ENCODE measurements at regions of chr7 and their contacts with region 1.

Region 1: DNA sequence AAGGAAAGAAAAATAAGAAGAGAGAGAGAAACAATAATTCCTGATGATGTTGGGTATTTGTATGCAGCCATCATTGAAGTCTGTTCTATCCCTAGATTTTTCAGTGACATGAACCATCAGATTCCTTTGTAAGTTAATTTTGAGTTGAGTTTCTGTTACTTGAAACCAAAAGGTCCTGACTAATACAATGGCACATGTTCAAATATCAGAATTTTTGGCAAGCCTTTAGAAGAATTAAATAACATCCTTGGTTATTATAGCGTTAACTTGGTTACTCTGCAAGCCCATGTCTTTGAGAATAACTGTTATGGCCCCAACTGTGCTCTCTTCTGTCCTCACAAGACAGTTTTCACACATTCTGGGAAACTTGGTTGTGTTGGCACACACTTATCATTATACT is 66.5 kb downstream of the SYPL1 start:
- DNase-seq: no peak

Region 2: DNA sequence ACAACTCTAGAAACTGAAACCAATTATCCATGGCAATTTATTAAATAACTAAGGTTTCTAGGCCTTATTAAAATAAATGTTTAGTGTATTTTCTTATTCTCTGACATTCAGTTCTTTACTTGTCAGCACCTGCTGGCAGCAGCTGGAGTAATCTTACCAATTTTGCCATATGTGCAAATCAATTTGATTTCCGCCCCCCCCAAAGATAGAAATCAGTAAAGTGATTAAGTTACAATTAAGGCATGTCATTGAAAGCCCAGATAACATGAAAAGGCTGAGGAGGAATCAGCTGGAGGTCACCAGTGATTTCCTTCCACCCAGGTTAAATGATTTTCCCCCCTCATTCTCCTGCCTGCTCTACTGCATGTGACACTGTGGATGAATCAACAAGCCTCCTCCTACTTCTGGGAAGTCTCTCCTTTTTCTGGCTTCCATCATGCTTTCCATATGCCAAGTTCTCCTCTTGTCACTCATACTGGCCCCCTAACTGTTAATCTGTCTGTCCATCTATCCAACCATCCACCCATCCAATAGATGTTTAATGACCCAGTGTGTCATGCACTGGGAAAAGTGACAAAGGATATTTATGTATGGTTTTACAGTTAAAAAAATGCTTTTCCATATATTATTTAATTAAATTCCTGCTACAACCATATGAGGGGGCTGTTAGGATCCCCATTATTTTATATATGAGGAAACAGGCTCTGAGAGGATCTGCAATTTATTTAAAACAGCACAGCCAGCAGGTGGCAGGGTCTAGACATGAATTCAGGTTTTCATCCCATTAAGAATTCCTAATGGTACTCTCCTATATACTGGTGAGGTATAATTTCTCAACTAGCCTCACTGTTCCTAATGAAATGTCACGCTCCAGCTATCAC is 285.7 kb before region 1 on chr7:
- intact Hi-C with region 1: loop called (anchors 2 kb)
- DNase-seq: no peak

Region 3: DNA sequence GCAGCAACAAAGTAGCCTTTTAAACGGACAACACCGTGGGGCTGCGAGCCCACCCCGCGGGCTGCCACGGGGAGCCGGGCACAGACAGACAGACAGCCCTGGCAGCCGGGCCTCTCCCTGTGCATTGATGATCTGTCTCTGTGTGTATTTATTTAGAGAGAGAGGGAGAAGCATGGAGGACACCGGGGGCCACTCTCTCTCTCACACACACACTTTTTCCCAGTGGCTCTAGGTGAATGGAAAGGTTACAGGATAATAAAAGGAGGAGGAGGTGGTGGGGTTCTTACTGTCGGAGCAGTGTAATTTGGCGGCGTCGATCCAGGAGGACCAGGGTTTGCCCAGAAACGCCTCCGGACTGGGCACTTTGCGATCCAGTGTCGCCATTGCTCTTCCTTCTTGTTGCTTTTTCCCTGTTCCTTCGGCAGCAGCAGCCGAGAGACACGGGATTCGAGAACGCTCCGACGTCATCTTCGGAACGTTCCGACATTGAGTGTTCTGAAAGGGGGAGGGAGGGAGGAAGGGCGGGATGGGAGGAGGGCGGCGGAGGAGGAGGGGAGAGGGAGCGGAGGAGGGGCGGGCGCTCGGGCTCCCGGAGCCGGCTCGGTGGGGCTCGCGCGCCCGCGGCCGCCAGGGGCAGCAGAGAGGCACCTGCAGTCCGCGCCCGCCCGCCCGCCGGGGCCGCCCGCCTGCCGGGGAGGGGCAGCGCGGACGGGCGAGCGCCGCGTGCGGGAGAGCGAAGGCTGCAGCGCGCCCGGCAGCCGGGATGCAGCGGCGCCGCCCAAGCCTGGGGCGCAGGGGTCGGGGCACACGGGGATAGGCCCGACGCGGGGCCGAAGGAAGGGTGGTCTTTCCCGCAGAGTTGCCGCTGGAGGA is 169.3 kb before region 1 on chr7 and contains the start of gene ATXN7L1:
- intact Hi-C with region 1: loop called (anchors 5 kb)
- DNase-seq: peak; percentile 96
- total RNA-seq, gene ATXN7L1: 5.5 TPM

Region 4: DNA sequence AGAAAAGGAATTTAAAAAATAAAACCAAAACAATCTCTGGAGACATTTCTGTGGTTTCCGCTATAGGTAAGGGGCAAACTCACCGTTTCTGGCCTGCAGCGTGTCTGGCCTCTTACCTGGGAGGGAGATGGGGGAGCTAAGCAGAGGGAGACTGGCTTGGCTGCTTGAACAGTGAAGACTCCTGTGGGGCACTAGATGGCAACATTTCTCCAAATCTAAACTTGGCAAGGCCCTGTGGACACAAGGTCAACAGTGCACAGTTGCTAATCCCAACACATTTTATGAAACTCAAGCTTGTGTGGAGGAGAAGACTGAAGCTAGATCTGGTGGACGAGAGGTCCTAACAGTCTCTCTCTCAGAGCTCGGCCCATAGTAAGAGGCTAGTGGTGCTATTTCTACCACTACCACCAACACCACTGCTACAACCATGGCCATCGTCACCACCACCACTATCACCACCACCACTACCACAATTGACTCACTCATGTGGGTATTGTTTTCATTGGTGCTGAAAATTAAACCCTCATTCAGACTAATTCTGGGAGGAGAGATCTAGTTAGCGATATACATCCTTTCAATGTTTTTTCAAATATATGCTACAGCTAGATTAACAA is 110.9 kb before region 1 on chr7:
- intact Hi-C with region 1: loop called (anchors 2 kb)
- DNase-seq: no peak

Region 5: GRCh38 chr7:105990726-105991453 is 54.7 kb before region 1 on chr7:
- intact Hi-C with region 1: no loop called
- DNase-seq: no peak

Region 6: DNA sequence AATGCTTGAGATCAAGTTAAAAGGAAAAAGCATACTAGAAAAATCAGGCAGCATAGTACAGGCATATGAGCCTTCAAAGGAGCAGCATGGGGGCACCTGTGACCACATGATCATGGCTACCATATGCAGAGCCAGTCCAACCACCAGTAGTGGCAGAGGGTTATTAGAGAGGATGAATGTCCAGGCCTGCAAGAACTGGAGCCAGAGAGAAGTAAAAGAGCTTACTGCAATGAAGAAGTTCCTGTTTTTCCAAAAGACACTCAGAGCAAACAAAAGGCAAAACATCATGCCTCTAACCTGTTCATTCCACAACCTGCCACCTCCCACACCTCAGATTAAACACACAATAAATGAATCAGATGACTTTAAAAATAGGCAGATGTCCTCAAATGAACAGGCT is 338.8 kb after region 1 on chr7:
- intact Hi-C with region 1: no loop called
- DNase-seq: no peak

Measured in cardiac septum (tissue), 1 donor.